ENCODE measurements at regions of chr10 and their contacts with region 1.

Region 1: GRCh38 chr10:43407576-43408330 is 1.2 kb downstream of the HNRNPF start:
- DNase-seq: peak; percentile 95
- ATAC-seq: peak; percentile 31
- H3K4me3 Mint-ChIP-seq: peak overlapping the region; percentile 99
- H3K27ac Mint-ChIP-seq: peak overlapping the region; percentile 100
- H3K4me1 Mint-ChIP-seq: peaks cover 30% of the 10 kb centered on the region
- H3K27me3 Mint-ChIP-seq: no peaks in the 10 kb centered on the region

Region 2: GRCh38 chr10:42638055-42638820 is 769.5 kb before region 1 on chr10 and contains the start of gene ZNF33B:
- CTCF ChIA-PET with region 1: no interaction called
- POLR2A ChIA-PET with region 1: no interaction called
- intact Hi-C with region 1: loop called in 1 of 2 experiments (anchors 2 kb)
- DNase-seq: peak; percentile 97
- ATAC-seq: peak; percentile 95
- H3K4me3 Mint-ChIP-seq: peak within 1 kb of the TSS; percentile 88
- H3K27ac Mint-ChIP-seq: peak within 1 kb of the TSS; percentile 97
- H3K4me1 Mint-ChIP-seq: peaks cover 25% of the 10 kb centered on the region
- H3K27me3 Mint-ChIP-seq: no peaks in the 10 kb centered on the region
- total RNA-seq, gene ZNF33B: 7.4 to 10.5 TPM

Region 3: DNA sequence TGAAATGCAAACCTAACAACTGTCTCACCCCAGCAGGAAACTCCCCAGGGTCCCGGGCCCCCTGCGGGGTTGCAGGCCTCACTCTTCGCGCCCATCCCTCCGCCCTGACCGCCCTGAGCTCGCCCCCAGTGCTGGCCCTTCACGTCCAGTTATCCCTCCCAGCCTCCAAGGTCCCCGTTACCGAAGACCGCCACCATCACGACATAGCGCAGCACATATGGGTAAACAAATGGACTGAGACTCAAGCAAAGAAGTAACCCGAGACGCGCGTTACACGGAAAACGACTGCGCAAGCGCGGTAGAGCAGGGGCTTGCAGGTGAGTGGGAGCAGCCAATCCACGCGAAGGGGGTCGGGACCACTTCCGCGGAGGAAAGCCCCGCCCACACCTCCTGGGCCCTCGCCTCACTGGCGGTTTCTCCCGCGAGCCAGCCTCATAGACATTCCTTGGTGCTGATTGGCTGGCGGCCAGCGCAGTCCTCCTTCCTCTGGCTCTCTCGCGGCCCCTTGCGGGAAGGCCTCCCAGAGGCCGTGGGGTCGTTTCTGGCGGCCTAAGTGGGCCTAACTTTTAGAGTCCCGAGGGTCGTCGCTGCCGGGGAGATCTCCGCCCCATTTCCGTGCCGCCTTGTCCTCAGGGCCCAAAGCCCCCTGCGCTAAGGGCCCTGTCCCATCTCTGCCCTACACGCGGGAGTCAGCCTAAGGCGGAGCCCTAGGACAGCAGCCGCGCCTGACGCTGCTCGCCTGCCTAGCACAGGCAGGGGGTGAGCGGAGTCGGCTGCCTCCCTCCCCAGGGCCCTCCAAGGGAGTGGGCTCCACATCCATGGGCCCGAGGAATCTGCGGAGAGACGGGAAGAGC is 45.5 kb before region 1 on chr10:
- CTCF ChIA-PET with region 1: no interaction called
- POLR2A ChIA-PET with region 1: interaction called, 3 read pairs
- intact Hi-C with region 1: loop called (anchors 1 to 2 kb)
- DNase-seq: peak; percentile 99
- ATAC-seq: peak; percentile 96
- H3K4me3 Mint-ChIP-seq: peak overlapping the region; percentile 95
- H3K27ac Mint-ChIP-seq: peak overlapping the region; percentile 98
- H3K4me1 Mint-ChIP-seq: peaks cover 22% of the 10 kb centered on the region
- H3K27me3 Mint-ChIP-seq: no peaks in the 10 kb centered on the region

Region 4: GRCh38 chr10:43420369-43421200 is 12.8 kb after region 1 on chr10:
- CTCF ChIA-PET with region 1: interaction called, 4 read pairs
- POLR2A ChIA-PET with region 1: interaction called, 16 read pairs
- intact Hi-C with region 1: loop called (anchors 1 kb)
- DNase-seq: peak; percentile 89
- ATAC-seq: peak; percentile 83
- H3K4me3 Mint-ChIP-seq: peak overlapping the region; percentile 79
- H3K27ac Mint-ChIP-seq: peak overlapping the region; percentile 99
- H3K4me1 Mint-ChIP-seq: peaks cover 37% of the 10 kb centered on the region
- H3K27me3 Mint-ChIP-seq: no peaks in the 10 kb centered on the region

Region 5: DNA sequence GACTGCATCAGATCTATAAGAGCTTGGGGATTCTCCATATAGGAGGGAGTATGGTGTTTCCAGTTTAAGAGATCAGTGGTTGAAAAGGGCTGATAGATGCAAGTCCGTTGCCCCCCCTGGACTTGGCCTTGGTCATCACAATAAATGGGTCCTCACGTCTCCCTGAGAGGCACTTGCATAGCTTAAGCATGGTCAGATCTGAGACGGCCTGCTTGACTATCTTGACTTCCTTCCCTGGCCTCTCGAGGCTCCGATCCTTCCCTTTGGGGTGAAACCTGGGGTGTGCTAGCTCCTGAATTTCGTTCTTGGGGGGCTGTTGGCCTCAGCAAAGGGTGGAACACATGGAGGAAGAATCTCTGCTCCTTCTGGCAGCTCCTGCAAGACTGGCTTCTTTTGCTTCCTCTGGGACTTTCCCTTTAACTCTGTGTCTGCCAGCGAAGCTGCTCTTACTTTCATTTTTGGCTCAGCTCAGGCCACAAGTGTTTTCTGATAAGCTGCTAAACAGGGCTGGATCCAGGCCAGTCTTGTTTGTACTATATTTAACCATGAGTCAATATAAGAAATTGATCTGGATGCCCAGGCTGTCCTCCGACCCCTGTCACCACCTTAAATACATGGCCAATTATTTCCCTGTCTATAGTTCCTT is 187.3 kb after region 1 on chr10:
- CTCF ChIA-PET with region 1: no interaction called
- POLR2A ChIA-PET with region 1: no interaction called
- intact Hi-C with region 1: loop called in 1 of 2 experiments (anchors 10 kb)
- DNase-seq: peak; percentile 69
- ATAC-seq: peak; percentile 80
- H3K4me3 Mint-ChIP-seq: peak overlapping the region; percentile 42
- H3K27ac Mint-ChIP-seq: peak overlapping the region; percentile 76
- H3K4me1 Mint-ChIP-seq: peaks cover 26% of the 10 kb centered on the region
- H3K27me3 Mint-ChIP-seq: peaks cover 5% of the 10 kb centered on the region

Measured in activated CD4-positive, alpha-beta T cell treated with anti-CD3 and anti-CD28 coated beads for 36 hours (primary cell).